Vagina (tissue), 2 donors: ENCODE measurements at regions of chr3 and their contacts with region 1.

Region 1: GRCh38 chr3:141237701-141238521 is 6.3 kb downstream of the PXYLP1 start:
- DNase-seq: peak in 1 of 2 donors; percentile 74
- H3K4me3 ChIP-seq: no peak overlapping the region
- H3K27ac ChIP-seq: no peak overlapping the region
- H3K4me1 ChIP-seq: peaks cover 33% of the 10 kb centered on the region
- H3K27me3 ChIP-seq: no peaks in the 10 kb centered on the region
- CTCF ChIP-seq: no peak
- POLR2A ChIP-seq: no peak

Region 2: GRCh38 chr3:141184430-141184829 is 53.5 kb before region 1 on chr3:
- intact Hi-C with region 1: no loop called
- DNase-seq: no peak
- H3K4me3 ChIP-seq: no peak overlapping the region
- H3K27ac ChIP-seq: no peak overlapping the region
- H3K4me1 ChIP-seq: no peaks in the 10 kb centered on the region
- H3K27me3 ChIP-seq: no peaks in the 10 kb centered on the region
- CTCF ChIP-seq: no peak
- POLR2A ChIP-seq: no peak

Region 3: GRCh38 chr3:141279077-141279967 is 41.4 kb after region 1 on chr3:
- intact Hi-C with region 1: loop called (anchors 5 kb)
- DNase-seq: no peak
- H3K4me3 ChIP-seq: no peak overlapping the region
- H3K27ac ChIP-seq: no peak overlapping the region
- H3K4me1 ChIP-seq: peaks cover 4% of the 10 kb centered on the region
- H3K27me3 ChIP-seq: no peaks in the 10 kb centered on the region
- CTCF ChIP-seq: no peak
- POLR2A ChIP-seq: no peak